OCI-LY7 (cell line): ENCODE measurements at regions of chr1 and their contacts with region 1.

Region 1: GRCh38 chr1:52056163-52056936 is at the start of gene BTF3L4:
- DNase-seq: peak; percentile 95
- H3K4me3 ChIP-seq: peak within 1 kb of the TSS; percentile 96
- H3K27ac ChIP-seq: peak within 1 kb of the TSS; percentile 80
- H3K4me1 ChIP-seq: peaks cover 38% of the 10 kb centered on the region
- CTCF ChIP-seq: peak; percentile 26; the same call in 1 of the 2 replicates
- total RNA-seq, gene BTF3L4: 25.5 and 27.4 TPM in 2 replicates

Region 2: GRCh38 chr1:51433269-51433971 is 622.9 kb before region 1 on chr1:
- CTCF ChIA-PET with region 1: no interaction called
- POLR2A ChIA-PET with region 1: no interaction called
- intact Hi-C with region 1: no loop called
- DNase-seq: peak; percentile 33
- H3K4me3 ChIP-seq: no peak overlapping the region
- H3K27ac ChIP-seq: no peak overlapping the region
- H3K4me1 ChIP-seq: peaks cover 20% of the 10 kb centered on the region
- CTCF ChIP-seq: no peak

Region 3: GRCh38 chr1:51729156-51729823 is 327.1 kb before region 1 on chr1:
- CTCF ChIA-PET with region 1: no interaction called
- POLR2A ChIA-PET with region 1: interaction called, 4 read pairs
- intact Hi-C with region 1: loop called (anchors 1 kb)
- DNase-seq: peak; percentile 98
- H3K4me3 ChIP-seq: peak overlapping the region; percentile 83
- H3K27ac ChIP-seq: peak overlapping the region; percentile 67
- H3K4me1 ChIP-seq: peaks cover 48% of the 10 kb centered on the region
- CTCF ChIP-seq: no peak

Region 4: DNA sequence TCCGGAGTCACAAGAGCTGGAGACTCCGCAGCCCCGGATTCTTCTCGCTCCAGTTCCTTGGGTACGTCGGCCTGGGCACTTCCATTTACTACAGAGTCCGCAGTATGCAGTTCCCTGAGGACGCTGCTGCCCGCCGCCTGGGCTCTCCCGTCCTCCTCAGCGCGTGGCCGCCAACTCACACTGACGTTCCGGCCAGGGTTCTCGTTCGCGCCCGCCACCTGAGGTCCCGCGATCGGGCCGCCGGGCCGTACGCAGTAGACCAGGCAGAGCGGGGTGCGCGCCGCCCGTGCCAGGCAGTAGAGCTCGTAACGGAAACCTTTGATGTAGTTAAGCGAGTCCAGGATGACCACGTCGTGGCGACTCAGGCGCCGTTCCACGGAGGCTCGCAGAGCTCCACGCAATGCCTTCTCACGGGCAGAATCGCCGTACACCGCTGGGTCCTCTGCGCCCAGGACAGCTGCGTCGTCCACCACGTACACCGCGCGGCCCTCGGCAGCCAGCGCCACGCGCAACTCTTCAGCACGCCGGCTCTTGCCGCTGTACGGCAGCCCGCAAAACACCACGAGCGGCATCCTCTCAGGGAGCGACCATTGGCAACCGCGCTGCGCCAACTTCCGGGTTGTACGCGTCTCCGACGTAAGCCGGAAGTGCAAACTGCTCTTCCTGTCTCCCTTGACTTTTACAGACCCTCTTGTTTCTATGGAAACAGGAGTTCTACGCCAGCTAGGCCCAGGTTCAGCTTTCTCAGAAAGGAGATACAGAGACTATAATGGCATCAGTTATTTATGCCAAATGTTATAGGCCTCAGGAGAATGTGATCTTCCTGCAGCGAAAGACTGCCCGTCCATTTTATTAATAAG is 22.9 kb before region 1 on chr1 and contains the start of gene KTI12:
- CTCF ChIA-PET with region 1: no interaction called
- POLR2A ChIA-PET with region 1: interaction called, 14 read pairs
- intact Hi-C with region 1: loop called (anchors 1 kb)
- DNase-seq: peak; percentile 95
- H3K4me3 ChIP-seq: peak within 1 kb of the TSS; percentile 88
- H3K27ac ChIP-seq: peak within 1 kb of the TSS; percentile 39
- H3K4me1 ChIP-seq: peaks cover 34% of the 10 kb centered on the region
- CTCF ChIP-seq: no peak
- total RNA-seq, gene KTI12: 15.8 and 16.4 TPM in 2 replicates

Region 5: DNA sequence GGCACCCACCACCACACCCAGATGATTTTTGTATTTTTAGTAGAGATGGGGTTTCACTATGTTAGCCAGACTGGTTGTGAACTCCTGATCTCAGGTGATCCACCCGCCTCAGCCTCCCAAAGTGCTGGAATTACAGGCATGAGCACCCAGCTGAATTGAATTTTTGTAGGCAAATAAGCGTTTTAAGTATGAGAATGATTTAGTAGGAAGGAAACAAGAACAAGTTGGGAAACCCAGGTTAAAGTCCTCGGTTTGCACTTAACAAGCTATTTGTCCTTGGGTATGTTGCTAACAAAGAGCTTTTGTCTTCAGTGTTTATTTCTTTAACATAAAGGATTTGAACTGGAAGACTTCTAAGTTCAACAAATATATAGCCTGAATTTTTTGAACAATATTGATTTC is 23.7 kb after region 1 on chr1:
- CTCF ChIA-PET with region 1: no interaction called
- POLR2A ChIA-PET with region 1: no interaction called
- intact Hi-C with region 1: no loop called
- DNase-seq: no peak
- H3K4me3 ChIP-seq: no peak overlapping the region
- H3K27ac ChIP-seq: no peak overlapping the region
- H3K4me1 ChIP-seq: no peaks in the 10 kb centered on the region
- CTCF ChIP-seq: no peak

Region 6: DNA sequence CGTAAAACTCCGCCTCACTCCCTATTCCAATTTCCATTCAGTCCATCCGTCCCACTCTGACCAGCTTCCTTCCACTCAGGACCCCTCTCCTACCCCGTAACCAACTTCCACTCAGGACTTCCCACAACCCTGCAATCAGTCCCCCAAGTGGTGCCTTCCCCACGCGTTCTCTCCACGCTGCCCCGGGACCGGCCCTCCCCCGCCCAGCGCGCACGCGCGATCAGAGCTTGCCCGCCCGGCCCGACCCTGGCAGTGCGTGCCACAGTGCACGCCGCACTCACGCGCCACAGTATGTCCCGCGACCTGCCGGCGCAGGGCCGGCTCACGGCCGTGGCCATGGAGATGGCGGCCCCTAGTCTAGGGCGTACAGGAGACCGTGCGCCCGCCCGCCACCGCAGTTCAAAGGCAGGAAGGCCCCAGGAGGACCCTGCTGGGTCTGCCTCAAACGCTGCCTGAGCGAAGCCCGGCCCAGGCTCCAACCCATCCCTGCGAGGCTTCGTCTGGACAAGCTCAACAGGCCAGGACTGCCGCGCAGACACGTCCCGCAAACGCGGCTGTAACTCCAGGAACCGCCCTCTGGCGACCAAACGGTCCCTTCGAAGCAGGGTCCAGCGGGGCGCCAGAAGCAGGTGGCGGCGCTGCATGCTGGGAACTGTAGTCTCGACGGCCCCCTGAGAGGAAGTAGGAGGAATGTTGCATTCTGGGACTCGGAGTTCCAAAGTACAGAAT is 1781.7 kb after region 1 on chr1 and contains the start of gene NDC1:
- CTCF ChIA-PET with region 1: no interaction called
- POLR2A ChIA-PET with region 1: no interaction called
- intact Hi-C with region 1: loop called (anchors 10 kb)
- DNase-seq: peak; percentile 96
- H3K4me3 ChIP-seq: peak within 1 kb of the TSS; percentile 83
- H3K27ac ChIP-seq: peak within 1 kb of the TSS; percentile 83
- H3K4me1 ChIP-seq: peaks cover 32% of the 10 kb centered on the region
- CTCF ChIP-seq: peak; percentile 23; the same call in 1 of the 2 replicates
- total RNA-seq, gene NDC1: 40.0 and 51.8 TPM in 2 replicates